Right lobe of liver (tissue), 6 donors: ENCODE measurements at regions of chr17 and their contacts with region 1.

Region 1: GRCh38 chr17:68260051-68260762 is 12.4 kb downstream of the AMZ2 start:
- DNase-seq: no peak
- ATAC-seq: no peak
- H3K4me3 ChIP-seq: no peak overlapping the region
- H3K27ac ChIP-seq: no peak overlapping the region
- H3K4me1 ChIP-seq: peaks cover 0 to 36% (median 11%) of the 10 kb centered on the region in 4 donors
- H3K27me3 ChIP-seq: no peaks in the 10 kb centered on the region
- CTCF ChIP-seq: no peak
- POLR2A ChIP-seq: no peak

Region 2: DNA sequence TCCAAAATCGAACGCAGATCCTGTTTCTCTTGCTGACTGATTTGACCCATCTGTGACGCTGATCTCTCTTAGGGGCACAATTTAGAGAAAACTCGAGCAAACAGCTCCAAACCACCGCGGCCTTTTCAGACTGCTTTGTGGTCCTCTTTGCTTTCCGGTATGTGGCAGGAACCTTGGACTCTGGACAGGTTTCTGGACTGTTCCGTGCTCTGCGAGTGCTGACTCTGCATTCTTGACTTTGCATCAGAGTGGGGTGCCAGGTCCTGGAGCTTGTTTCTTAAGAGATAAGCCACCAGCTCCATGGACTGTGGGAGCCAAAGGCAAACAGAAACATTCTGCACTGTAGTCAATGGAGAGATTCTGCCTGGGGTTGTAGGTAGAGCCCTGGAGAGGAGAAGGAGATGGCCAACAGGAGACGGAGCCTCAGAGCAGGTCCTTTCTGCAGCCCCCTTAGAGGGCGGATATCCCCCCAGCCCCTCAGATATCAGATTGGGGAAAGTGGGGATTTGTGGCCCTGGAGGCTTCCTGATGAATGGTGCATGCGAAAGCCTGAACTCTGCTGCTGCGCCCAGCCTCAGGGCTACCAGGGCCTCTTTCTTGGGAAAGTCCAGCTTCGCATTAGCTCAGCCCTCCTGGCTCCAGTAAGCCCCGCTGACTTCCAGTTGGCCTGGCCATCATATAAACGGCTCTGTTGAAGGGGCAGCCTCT is 131.5 kb after region 1 on chr17:
- intact Hi-C with region 1: loop called (anchors 5 to 10 kb)
- DNase-seq: peak in 2 of 3 donors; percentile 74 to 86
- ATAC-seq: peak; percentile 72 to 87 (median 78)
- H3K4me3 ChIP-seq: no peak overlapping the region
- H3K27ac ChIP-seq: peak overlapping the region; percentile 38 to 74 (median 66)
- H3K4me1 ChIP-seq: peaks cover 0 to 30% (median 14%) of the 10 kb centered on the region in 4 donors
- H3K27me3 ChIP-seq: no peaks in the 10 kb centered on the region
- CTCF ChIP-seq: no peak
- POLR2A ChIP-seq: no peak

Region 3: DNA sequence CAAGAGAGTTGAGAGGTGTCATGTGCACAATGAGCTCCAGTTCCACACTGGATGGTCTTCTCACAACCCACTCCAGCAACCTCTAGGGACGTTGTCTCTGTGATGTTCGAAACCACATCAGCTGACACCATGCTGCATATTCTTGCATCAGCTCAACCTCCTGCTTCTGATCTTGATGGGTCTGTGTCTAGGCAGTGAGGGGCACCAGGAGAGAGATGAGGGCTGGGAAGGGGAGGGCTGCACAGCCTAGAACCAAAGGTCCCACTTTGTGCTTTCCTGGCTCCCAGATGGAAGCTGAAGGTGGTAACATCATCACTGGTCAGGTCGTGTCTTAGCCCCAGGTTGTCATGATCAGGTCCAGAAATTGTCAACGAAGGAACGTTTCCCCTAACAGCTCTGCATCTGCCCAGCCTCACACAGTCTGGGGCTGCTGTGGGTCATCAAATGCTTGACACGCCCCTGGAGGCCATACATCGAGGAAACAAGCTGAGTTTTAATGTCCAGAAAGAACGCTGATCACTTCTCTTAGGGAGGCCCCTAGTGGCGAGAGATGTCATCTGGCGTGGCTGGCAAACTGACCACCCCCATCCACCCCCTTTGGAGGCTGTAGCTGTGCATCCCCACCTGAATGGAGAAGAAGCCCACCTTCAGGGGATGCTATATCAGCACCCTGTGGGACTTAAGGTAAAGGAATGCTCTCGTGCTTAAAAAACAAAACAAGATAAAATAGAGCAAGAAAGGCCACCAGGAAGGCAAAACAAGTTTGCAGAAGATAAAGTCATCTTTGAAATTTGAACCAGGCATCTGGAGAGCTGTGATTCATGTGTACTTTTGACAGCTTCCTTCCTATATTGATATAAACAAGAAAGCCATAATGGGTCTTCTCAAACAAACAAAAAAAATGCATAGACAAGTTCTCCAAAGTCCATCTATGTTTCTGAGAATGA is 138.8 kb after region 1 on chr17:
- intact Hi-C with region 1: loop called (anchors 5 to 10 kb)
- DNase-seq: peak in 2 of 3 donors; percentile 55 to 59
- ATAC-seq: peak; percentile 76 to 90 (median 82)
- H3K4me3 ChIP-seq: no peak overlapping the region
- H3K27ac ChIP-seq: peak overlapping the region in 1 of 3 donors; percentile 57
- H3K4me1 ChIP-seq: peaks cover 0 to 5% (median 0%) of the 10 kb centered on the region in 4 donors
- H3K27me3 ChIP-seq: no peaks in the 10 kb centered on the region
- CTCF ChIP-seq: peak; percentile 75 to 82 (median 82)
- POLR2A ChIP-seq: no peak

Region 4: DNA sequence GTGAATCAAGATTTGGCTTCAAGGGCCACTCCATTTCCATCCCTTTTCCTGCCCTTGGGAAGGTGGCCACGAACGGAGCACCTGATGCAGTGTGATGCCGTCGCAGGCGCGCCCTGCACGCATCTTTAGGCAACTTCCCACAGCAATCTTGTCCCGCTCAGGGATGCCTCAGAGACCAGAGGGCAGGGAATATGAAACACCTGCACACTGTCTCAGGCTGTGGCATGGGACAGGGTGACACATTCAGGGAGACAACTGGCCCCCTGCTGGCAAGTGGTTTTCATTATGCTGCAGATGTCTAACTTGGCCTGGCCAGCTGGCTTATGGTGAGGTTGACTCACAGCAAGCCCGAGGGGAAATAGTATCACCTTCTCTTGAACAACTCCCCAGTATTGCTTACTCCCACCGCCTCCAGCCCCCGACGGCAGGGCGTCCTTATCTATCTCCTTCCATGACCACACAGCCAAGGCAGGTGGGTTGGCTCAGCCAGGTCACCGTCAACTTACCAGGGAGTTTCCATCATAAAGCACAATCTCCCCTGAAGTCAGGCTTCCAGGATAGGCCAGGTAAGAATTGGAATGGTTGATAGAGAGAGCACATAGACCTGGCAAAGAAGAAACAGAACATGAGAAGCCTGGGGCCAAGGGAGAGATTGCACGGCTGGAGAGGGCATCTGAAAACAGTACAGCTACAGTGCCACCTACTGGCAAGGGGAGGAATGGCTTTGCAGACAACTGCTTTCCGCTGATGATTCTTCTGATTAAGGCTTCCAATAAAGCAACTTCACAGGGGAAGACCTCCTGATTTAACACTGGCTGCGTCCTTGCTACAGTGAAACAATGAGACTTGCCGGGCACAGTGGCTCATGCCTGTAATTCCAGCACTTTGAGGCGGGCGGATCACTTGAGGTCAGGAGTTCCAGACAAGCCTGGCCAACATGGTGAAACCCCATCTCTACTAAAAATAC is 176.0 kb after region 1 on chr17:
- intact Hi-C with region 1: loop called in 1 of 2 experiments (anchors 10 kb)
- DNase-seq: peak; percentile 66 to 83 (median 69)
- ATAC-seq: peak; percentile 78 to 89 (median 84)
- H3K4me3 ChIP-seq: no peak overlapping the region
- H3K27ac ChIP-seq: no peak overlapping the region
- H3K4me1 ChIP-seq: peaks cover 0 to 19% (median 7%) of the 10 kb centered on the region in 4 donors
- H3K27me3 ChIP-seq: no peaks in the 10 kb centered on the region
- CTCF ChIP-seq: peak; percentile 90 to 95 (median 94)
- POLR2A ChIP-seq: no peak

Region 5: GRCh38 chr17:68462381-68463210 is 202.4 kb after region 1 on chr17:
- intact Hi-C with region 1: loop called in 1 of 2 experiments (anchors 10 kb)
- DNase-seq: peak in 2 of 3 donors; percentile 32 to 76
- ATAC-seq: peak; percentile 85 to 90 (median 86)
- H3K4me3 ChIP-seq: no peak overlapping the region
- H3K27ac ChIP-seq: no peak overlapping the region
- H3K4me1 ChIP-seq: peaks cover 0 to 21% (median 2%) of the 10 kb centered on the region in 4 donors
- H3K27me3 ChIP-seq: no peaks in the 10 kb centered on the region
- CTCF ChIP-seq: peak; percentile 72 to 79 (median 74)
- POLR2A ChIP-seq: no peak